Activated CD4-positive, alpha-beta T cell treated with anti-CD3 and anti-CD28 coated beads, Interleukin-2, amount 10 ng/mL, durations not matched to agents 24 days and 14 days (primary cell): ENCODE measurements at regions of chr7 and their contacts with region 1.

Region 1: GRCh38 chr7:55534175-55534915 is 38.0 kb downstream of the VOPP1 start:
- DNase-seq: peak; percentile 93
- H3K4me3 Mint-ChIP-seq: peak overlapping the region; percentile 70
- H3K27ac Mint-ChIP-seq: peak overlapping the region; percentile 99
- H3K4me1 Mint-ChIP-seq: peaks cover 87% of the 10 kb centered on the region
- H3K27me3 Mint-ChIP-seq: peaks cover 2% of the 10 kb centered on the region

Region 2: GRCh38 chr7:55309040-55309991 is 225.0 kb before region 1 on chr7:
- intact Hi-C with region 1: loop called (anchors 1 kb)
- DNase-seq: peak; percentile 82
- H3K4me3 Mint-ChIP-seq: peak overlapping the region; percentile 41
- H3K27ac Mint-ChIP-seq: peak overlapping the region; percentile 87
- H3K4me1 Mint-ChIP-seq: peaks cover 27% of the 10 kb centered on the region
- H3K27me3 Mint-ChIP-seq: peaks cover 4% of the 10 kb centered on the region

Region 3: GRCh38 chr7:55432939-55433784 is 101.2 kb before region 1 on chr7:
- intact Hi-C with region 1: loop called (anchors 2 kb)
- DNase-seq: peak; percentile 75
- H3K4me3 Mint-ChIP-seq: no peak overlapping the region
- H3K27ac Mint-ChIP-seq: peak overlapping the region; percentile 12
- H3K4me1 Mint-ChIP-seq: peaks cover 14% of the 10 kb centered on the region
- H3K27me3 Mint-ChIP-seq: no peaks in the 10 kb centered on the region

Region 4: GRCh38 chr7:55498142-55498541 is 36.2 kb before region 1 on chr7:
- intact Hi-C with region 1: no loop called
- DNase-seq: no peak
- H3K4me3 Mint-ChIP-seq: no peak overlapping the region
- H3K27ac Mint-ChIP-seq: peak overlapping the region; percentile 25
- H3K4me1 Mint-ChIP-seq: peaks cover 24% of the 10 kb centered on the region
- H3K27me3 Mint-ChIP-seq: no peaks in the 10 kb centered on the region

Region 5: GRCh38 chr7:55509322-55509721 is 25.0 kb before region 1 on chr7:
- intact Hi-C with region 1: loop called (anchors 1 kb)
- DNase-seq: no peak
- H3K4me3 Mint-ChIP-seq: no peak overlapping the region
- H3K27ac Mint-ChIP-seq: peak overlapping the region; percentile 67
- H3K4me1 Mint-ChIP-seq: peaks cover 51% of the 10 kb centered on the region
- H3K27me3 Mint-ChIP-seq: no peaks in the 10 kb centered on the region

Region 6: GRCh38 chr7:55557666-55558188 is 23.4 kb after region 1 on chr7:
- intact Hi-C with region 1: loop called (anchors 1 kb)
- DNase-seq: peak; percentile 61
- H3K4me3 Mint-ChIP-seq: peak overlapping the region; percentile 64
- H3K27ac Mint-ChIP-seq: peak overlapping the region; percentile 89
- H3K4me1 Mint-ChIP-seq: peaks cover 80% of the 10 kb centered on the region
- H3K27me3 Mint-ChIP-seq: no peaks in the 10 kb centered on the region

Region 7: GRCh38 chr7:55641811-55642210 is 107.5 kb after region 1 on chr7:
- intact Hi-C with region 1: no loop called
- DNase-seq: peak; percentile 73
- H3K4me3 Mint-ChIP-seq: peak overlapping the region; percentile 28
- H3K27ac Mint-ChIP-seq: peak overlapping the region; percentile 12
- H3K4me1 Mint-ChIP-seq: peaks cover 8% of the 10 kb centered on the region
- H3K27me3 Mint-ChIP-seq: peaks cover 9% of the 10 kb centered on the region